H1 (cell line): ENCODE measurements at regions of chr1 and their contacts with region 1.

Region 1: DNA sequence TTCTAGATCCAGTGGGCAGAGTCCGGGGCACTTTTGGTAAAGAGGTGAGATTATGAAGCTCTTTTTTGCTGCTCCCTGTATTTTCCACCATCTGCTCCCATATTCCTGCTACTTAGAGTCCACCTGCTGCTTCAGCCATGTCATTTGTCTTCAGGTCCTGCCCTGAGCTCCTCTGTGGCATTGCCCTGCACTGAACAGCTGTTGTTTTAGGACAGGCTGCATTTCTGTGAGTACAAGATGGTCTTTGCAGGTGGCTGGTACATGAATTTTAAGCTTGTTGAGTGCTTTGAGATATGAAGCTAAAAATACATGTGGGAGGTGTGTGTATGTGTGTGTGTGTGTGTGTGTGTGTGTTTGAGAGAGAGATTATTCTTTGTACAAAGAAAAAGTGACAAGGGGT is 21.9 kb downstream of the MT1HL1 start:
- DNase-seq: no peak
- H3K4me3 ChIP-seq: no peak overlapping the region
- H3K27ac ChIP-seq: no peak overlapping the region
- H3K4me1 ChIP-seq: peaks cover 0 to 3% (median 0%) of the 10 kb centered on the region in 4 experiments; a peak in 2 of 7 replicates
- H3K27me3 ChIP-seq: no peaks in the 10 kb centered on the region
- CTCF ChIP-seq: no peak
- EP300 ChIP-seq: no peak
- POLR2A ChIP-seq: no peak
- RAD21 ChIP-seq: no peak

Region 2: DNA sequence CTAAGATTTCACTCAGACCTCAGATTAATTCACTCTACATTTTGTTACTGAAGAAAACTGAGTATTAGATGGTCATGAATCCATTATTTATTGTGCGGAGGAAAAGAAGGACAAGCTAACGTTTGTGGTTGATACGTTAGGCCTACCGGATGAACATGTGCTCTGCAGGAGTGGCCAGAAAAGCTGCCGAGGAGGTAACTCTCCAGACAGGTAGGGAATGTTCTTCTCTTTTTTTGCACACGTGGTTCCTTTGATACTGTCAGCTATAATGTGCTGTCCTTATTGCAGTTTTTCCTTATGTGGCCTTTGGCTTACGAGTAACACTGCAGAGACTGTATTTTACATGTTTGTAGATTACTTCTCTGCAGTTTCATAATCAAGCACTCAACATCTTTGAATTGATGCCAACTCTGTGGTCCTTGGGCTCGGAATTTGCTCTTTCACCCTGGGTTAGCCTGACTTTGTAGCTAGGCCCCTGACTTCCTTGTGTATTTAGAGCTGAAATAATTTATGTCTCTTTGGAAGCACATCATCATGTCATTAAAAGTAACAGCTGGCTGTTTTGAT is 173.7 kb before region 1 on chr1:
- CTCF ChIA-PET with region 1: no interaction called
- POLR2A ChIA-PET with region 1: no interaction called
- DNase-seq: no peak
- H3K4me3 ChIP-seq: no peak overlapping the region
- H3K27ac ChIP-seq: no peak overlapping the region
- H3K4me1 ChIP-seq: no peaks in the 10 kb centered on the region
- H3K27me3 ChIP-seq: no peaks in the 10 kb centered on the region
- CTCF ChIP-seq: no peak
- EP300 ChIP-seq: no peak
- POLR2A ChIP-seq: no peak
- RAD21 ChIP-seq: no peak

Region 3: DNA sequence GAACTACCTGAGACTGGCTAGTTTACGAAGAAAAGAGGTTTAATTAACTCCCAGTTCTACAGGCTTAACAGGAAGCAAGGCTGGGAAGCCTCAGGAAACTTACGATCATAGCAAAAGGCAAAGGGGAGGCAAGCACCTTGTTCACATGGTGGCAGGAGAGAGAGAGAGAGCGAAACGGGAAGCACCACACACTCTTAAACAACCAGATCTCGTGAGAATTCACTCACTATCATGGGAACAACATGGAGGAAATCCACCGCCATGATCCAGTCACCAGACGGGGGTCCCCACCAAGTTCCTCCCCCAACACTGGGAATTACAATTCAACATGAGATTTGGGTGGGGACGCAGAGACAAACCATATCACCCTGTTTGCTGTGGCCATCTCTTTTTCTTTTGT is 10.1 kb after region 1 on chr1:
- CTCF ChIA-PET with region 1: interaction called, 11 read pairs
- POLR2A ChIA-PET with region 1: no interaction called
- DNase-seq: no peak
- H3K4me3 ChIP-seq: no peak overlapping the region
- H3K27ac ChIP-seq: no peak overlapping the region
- H3K4me1 ChIP-seq: no peaks in the 10 kb centered on the region
- H3K27me3 ChIP-seq: no peaks in the 10 kb centered on the region
- CTCF ChIP-seq: no peak
- EP300 ChIP-seq: no peak
- POLR2A ChIP-seq: no peak
- RAD21 ChIP-seq: no peak